ENCODE measurements at regions of chr5 and their contacts with region 1.

Region 1: GRCh38 chr5:146533260-146533857 is 17.4 kb upstream of the GPR151 start:
- DNase-seq: peak; percentile 68 to 88
- H3K4me3 ChIP-seq: no peak overlapping the region
- H3K4me1 ChIP-seq: no peaks in the 10 kb centered on the region
- H3K27me3 ChIP-seq: no peaks in the 10 kb centered on the region

Region 2: DNA sequence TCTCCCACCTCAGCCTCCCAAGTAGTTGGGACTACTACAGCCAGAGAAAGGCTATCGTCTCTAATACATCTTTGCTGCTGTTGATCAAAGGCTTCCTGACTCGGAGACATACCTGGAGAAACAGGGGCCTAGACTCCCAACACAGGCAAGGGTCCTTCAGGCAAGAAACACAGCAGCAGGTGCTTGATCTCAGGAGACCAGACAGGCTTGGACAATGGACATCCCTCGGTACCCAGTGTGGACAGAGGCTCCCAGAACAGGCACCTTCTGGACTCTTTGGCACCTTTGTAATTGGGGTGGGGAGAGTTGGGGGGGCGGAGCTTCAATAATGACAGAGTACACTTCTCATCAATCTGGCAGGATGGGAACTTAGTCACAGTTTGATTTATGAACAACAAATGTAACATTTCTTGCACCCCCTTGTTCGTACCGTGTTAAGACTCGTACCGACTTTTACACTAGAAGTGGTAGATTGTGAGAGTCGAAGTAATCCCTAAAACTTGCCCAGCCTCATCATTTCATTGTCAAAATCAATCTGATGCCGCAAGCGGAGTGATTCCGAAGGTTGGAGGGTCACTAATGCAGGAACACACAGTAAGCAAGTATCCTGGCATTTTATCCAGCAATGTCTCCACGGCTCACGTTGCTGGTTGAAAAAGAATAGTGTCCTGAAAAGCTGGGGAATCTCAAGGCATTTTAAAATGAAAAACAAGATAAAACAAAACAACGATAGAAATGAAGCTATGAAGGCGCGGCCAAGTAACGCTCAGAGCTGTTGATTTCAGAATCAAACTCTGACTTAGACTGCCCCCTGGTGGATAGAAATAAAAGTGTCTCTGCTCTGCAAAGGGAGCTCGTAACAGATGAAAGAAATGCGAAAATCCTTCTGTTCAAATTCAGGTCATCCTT is 655.1 kb after region 1 on chr5:
- in situ Hi-C with region 1: loop called (anchors 10 kb)
- DNase-seq: peak; percentile 47 to 72
- H3K4me3 ChIP-seq: no peak overlapping the region
- H3K4me1 ChIP-seq: no peaks in the 10 kb centered on the region; the same call in 1 of the 2 replicates
- H3K27me3 ChIP-seq: no peaks in the 10 kb centered on the region